Adrenal gland (tissue), 19 donors: ENCODE measurements at regions of chr1 and their contacts with region 1.

Region 1: DNA sequence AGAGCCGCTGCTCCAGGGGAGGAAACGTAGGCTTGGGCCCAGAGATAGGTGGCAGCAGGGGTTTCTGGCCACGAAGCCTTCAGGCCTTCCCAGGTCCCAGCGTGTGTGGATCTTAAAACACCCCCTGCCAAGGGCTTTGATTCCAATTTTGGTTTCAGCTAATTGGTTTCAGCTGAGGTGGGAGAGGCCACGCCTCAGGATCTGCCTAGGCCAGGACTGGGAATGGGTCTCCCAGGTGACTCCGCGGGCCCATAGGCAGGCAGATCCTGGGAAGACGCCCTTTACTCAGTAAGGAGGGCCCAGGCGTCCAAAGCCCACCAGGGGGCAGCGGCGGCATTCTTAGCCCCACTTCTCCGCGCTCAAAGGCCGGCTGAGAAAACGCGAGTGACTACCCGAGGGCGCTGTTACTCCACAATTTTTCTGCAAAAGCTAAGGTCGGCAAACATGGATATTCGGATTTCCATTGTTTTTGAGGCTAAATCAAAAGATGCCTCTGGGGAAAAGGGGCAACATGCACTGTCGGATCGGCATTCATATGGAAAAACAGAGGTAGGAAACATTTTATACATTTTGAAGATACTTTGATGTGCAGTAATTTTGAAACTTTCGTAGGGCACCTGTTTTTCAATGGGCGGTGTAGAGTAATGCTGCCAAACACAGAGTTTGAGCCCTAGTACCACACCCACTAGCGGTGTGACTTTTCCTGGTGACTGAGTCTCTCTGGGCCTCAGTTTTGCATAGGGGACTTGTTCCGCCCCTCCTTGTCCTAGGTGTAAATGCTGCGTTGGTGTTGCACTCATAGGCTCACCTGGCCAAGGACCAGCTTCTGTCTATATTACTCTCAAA is 31.8 kb upstream of the BCL10 start:
- DNase-seq: peak; percentile 82 to 94 (median 93)
- H3K4me3 ChIP-seq: peak overlapping the region in 1 of 4 donors; percentile 12
- H3K27ac ChIP-seq: no peak overlapping the region
- H3K4me1 ChIP-seq: no peaks in the 10 kb centered on the region
- H3K27me3 ChIP-seq: no peaks in the 10 kb centered on the region
- CTCF ChIP-seq: peak; percentile 80 to 99 (median 99)
- POLR2A ChIP-seq: no peak

Region 2: DNA sequence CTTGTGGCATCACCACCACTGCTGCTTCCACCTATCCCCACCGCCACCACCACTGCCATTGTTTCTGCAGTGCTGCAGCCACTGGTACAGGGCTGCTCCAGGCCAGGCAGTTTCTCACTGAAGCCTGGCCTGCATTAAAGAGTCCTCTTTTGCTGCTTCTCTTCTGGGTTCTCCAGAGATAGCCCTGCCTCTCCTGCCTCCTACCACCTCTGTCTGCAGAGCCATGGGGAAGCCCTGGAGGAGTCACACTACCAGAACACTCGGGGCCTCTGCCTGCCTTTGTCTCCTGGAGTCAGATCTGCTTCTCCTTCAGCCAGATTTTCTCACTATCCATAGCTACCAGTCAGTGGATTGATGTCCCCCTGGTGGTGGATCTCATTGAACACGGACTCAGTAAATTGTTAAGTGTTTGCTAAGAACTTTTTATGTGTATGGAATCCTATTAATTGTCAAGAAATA is 194.4 kb after region 1 on chr1:
- intact Hi-C with region 1: loop called (anchors 5 kb)
- DNase-seq: peak; percentile 61 to 88 (median 71)
- H3K4me3 ChIP-seq: no peak overlapping the region
- H3K27ac ChIP-seq: no peak overlapping the region
- H3K4me1 ChIP-seq: no peaks in the 10 kb centered on the region
- H3K27me3 ChIP-seq: no peaks in the 10 kb centered on the region
- CTCF ChIP-seq: peak; percentile 57 to 75 (median 66)
- POLR2A ChIP-seq: no peak

Region 3: GRCh38 chr1:85576642-85577418 is 268.6 kb after region 1 on chr1:
- intact Hi-C with region 1: loop called (anchors 2 to 10 kb)
- DNase-seq: peak; percentile 80 to 89 (median 82)
- H3K4me3 ChIP-seq: peak overlapping the region; percentile 36 to 92 (median 67)
- H3K27ac ChIP-seq: peak overlapping the region in 4 of 5 donors; percentile 82 to 98 (median 86)
- H3K4me1 ChIP-seq: peaks cover 12 to 13% of the 10 kb centered on the region in 2 donors
- H3K27me3 ChIP-seq: no peaks in the 10 kb centered on the region
- CTCF ChIP-seq: peak; percentile 24 to 79 (median 62)
- POLR2A ChIP-seq: peak; percentile 51 to 77

Region 4: GRCh38 chr1:85692730-85693314 is 384.6 kb after region 1 on chr1:
- intact Hi-C with region 1: loop called (anchors 5 kb)
- DNase-seq: no peak
- H3K4me3 ChIP-seq: no peak overlapping the region
- H3K27ac ChIP-seq: no peak overlapping the region
- H3K4me1 ChIP-seq: peaks cover 0 to 1% of the 10 kb centered on the region in 2 donors
- H3K27me3 ChIP-seq: no peaks in the 10 kb centered on the region
- CTCF ChIP-seq: peak; percentile 13 to 64 (median 48)
- POLR2A ChIP-seq: no peak

Region 5: DNA sequence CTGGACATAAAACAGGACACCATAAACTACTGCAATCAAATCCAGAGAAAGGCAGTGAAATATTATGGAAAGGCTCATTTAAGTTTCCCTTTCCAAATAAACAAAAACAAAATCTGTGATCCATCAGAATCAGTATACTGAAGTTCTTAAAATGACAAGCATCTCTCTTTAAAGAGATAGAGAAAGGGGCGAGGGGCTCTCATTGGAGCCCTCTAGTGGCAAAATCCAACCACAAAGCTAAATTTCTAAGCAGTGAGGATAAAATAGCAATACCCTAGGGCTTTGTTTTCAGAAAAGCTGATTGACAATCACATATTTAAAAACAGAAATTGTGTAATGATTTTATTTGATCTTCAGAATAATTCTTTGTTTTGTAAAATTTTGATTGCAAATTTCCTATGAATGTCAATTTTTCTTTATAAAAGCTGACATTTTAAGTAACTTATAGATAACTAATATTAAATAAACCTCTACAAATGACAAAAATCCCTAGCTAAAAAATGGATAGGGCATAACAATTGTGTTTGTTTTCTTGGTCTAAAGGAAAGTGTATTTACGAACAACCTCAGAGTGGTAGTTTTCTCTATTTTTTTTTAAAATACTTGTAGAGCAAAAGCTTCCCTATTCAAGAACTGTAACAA is 710.2 kb after region 1 on chr1:
- intact Hi-C with region 1: loop called in 1 of 2 experiments (anchors 10 kb)
- DNase-seq: peak in 2 of 7 donors; percentile 8 to 17
- H3K4me3 ChIP-seq: no peak overlapping the region
- H3K27ac ChIP-seq: no peak overlapping the region
- H3K4me1 ChIP-seq: no peaks in the 10 kb centered on the region
- H3K27me3 ChIP-seq: no peaks in the 10 kb centered on the region
- CTCF ChIP-seq: peak; percentile 22 to 75 (median 38)
- POLR2A ChIP-seq: no peak